CD8-positive, alpha-beta T cell (primary cell): ENCODE measurements at regions of chrX and their contacts with region 1.

Region 1: DNA sequence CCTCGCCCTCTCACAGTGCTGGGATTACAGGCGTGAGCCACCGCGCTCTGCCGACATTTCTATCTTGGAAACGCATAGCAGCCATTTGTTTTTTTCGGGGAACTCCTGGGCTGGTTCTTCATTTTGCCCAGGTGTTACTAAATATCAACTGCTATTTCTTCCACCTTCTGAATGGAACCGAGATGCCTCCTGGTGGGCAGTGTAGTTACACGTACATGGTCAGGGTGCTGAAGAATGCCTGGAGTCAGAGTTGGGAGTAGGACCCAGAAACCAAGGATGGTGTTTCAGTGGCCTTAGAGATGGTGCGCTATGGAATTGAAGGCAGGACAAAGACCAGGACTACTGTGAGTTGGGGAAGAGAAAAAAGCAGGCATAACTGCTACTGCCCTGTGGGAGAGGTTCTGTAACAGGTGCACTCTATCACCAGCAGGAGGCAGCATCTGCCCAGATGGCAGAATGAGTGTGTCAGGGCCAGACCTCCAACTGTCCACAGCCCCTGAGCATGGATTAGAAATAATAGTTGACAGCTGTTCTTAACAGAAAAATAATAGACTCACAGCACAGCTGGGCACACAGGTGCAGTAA is 81.7 kb downstream of the ZC4H2 start:
- DNase-seq: peak in 6 of 9 experiments; percentile 0 to 60 (median 24)
- ATAC-seq: no peak
- H3K4me3 ChIP-seq: no peak overlapping the region
- H3K4me3 Mint-ChIP-seq: no peak overlapping the region
- H3K27ac ChIP-seq: no peak overlapping the region
- H3K27ac Mint-ChIP-seq: no peak overlapping the region
- H3K4me1 ChIP-seq: no peaks in the 10 kb centered on the region
- H3K4me1 Mint-ChIP-seq: peaks cover 8% of the 10 kb centered on the region
- H3K27me3 ChIP-seq: no peaks in the 10 kb centered on the region
- H3K27me3 Mint-ChIP-seq: no peaks in the 10 kb centered on the region
- CTCF ChIP-seq: peak; percentile 17

Region 2: GRCh38 chrX:65451663-65452062 is 557.1 kb after region 1 on chrX:
- CTCF ChIA-PET with region 1: no interaction called
- POLR2A ChIA-PET with region 1: no interaction called
- intact Hi-C with region 1: loop called in 1 of 2 experiments (anchors 5 kb)
- DNase-seq: peak in 2 of 9 experiments; percentile 23 to 34
- ATAC-seq: no peak
- H3K4me3 ChIP-seq: no peak overlapping the region
- H3K4me3 Mint-ChIP-seq: no peak overlapping the region
- H3K27ac ChIP-seq: no peak overlapping the region
- H3K27ac Mint-ChIP-seq: no peak overlapping the region
- H3K4me1 ChIP-seq: no peaks in the 10 kb centered on the region
- H3K4me1 Mint-ChIP-seq: no peaks in the 10 kb centered on the region
- H3K27me3 ChIP-seq: no peaks in the 10 kb centered on the region
- H3K27me3 Mint-ChIP-seq: no peaks in the 10 kb centered on the region
- CTCF ChIP-seq: no peak

Region 3: DNA sequence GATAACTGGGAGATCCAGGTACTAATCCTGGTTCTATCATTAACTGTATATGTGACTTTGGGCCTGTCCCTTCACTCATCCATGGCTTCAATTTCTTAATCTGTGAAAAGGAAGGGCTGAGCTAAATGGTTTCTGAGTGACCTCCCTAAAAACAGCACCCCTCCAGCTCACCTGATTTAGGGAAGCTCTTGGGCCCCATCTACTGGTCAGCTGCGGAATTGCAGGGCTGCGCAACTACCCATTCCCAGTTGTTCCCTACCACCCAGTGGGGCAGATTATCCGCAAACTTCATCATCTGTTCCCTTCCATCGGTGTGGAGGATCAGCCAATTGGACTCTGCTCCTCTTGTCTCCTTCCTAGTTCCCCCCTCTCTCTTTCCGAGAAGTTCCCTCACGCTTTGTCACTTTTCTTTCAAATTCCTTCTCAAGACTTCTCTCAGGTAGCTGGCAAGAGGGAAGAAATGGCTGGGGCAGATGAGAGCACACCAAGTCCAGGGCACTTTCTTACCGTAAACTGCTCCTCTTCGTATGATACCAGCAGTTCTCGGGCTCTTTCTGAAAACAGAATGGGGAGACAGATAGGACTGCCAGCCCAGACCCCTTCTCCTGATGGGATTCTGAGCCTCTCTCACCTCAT is 634.3 kb after region 1 on chrX:
- CTCF ChIA-PET with region 1: no interaction called
- POLR2A ChIA-PET with region 1: no interaction called
- intact Hi-C with region 1: loop called in 1 of 2 experiments (anchors 2 kb)
- DNase-seq: peak; percentile 13 to 76 (median 54)
- ATAC-seq: peak; percentile 78
- H3K4me3 ChIP-seq: no peak overlapping the region
- H3K4me3 Mint-ChIP-seq: no peak overlapping the region
- H3K27ac ChIP-seq: no peak overlapping the region
- H3K27ac Mint-ChIP-seq: no peak overlapping the region
- H3K4me1 ChIP-seq: peaks cover 13% of the 10 kb centered on the region
- H3K4me1 Mint-ChIP-seq: peaks cover 18% of the 10 kb centered on the region
- H3K27me3 ChIP-seq: no peaks in the 10 kb centered on the region
- H3K27me3 Mint-ChIP-seq: no peaks in the 10 kb centered on the region
- CTCF ChIP-seq: peak; percentile 77

Region 4: GRCh38 chrX:66015152-66015831 is 1120.7 kb after region 1 on chrX:
- CTCF ChIA-PET with region 1: no interaction called
- POLR2A ChIA-PET with region 1: no interaction called
- intact Hi-C with region 1: no loop called
- DNase-seq: peak in 3 of 9 experiments; percentile 11 to 42 (median 11)
- ATAC-seq: no peak
- H3K4me3 ChIP-seq: peak overlapping the region; percentile 15 to 24
- H3K4me3 Mint-ChIP-seq: peak overlapping the region; percentile 71
- H3K27ac ChIP-seq: peak overlapping the region in 1 of 2 experiments; percentile 25
- H3K27ac Mint-ChIP-seq: peak overlapping the region; percentile 88
- H3K4me1 ChIP-seq: peaks cover 64% of the 10 kb centered on the region
- H3K4me1 Mint-ChIP-seq: peaks cover 79% of the 10 kb centered on the region
- H3K27me3 ChIP-seq: no peaks in the 10 kb centered on the region
- H3K27me3 Mint-ChIP-seq: no peaks in the 10 kb centered on the region
- CTCF ChIP-seq: no peak